Heart right ventricle (tissue), 16 donors: ENCODE measurements at regions of chr16 and their contacts with region 1.

Region 1: GRCh38 chr16:75206749-75207451 is at the start of gene CTRB2:
- DNase-seq: no peak
- ATAC-seq: peak in 2 of 8 donors; percentile 9 to 12
- H3K4me3 ChIP-seq: no peak within 1 kb of the TSS
- H3K27ac ChIP-seq: no peak within 1 kb of the TSS
- H3K4me1 ChIP-seq: no peaks in the 10 kb centered on the region
- H3K27me3 ChIP-seq: no peaks in the 10 kb centered on the region
- CTCF ChIP-seq: no peak
- total RNA-seq, gene CTRB2: 2.0 to 3.8 (median 2.8) TPM in 7 of 10 donors, not detected in the others

Region 2: GRCh38 chr16:75053791-75054555 is 152.9 kb before region 1 on chr16:
- intact Hi-C with region 1: no loop called
- DNase-seq: peak; percentile 71
- ATAC-seq: peak; percentile 29 to 85 (median 68)
- H3K4me3 ChIP-seq: no peak overlapping the region
- H3K27ac ChIP-seq: peak overlapping the region in 9 of 10 donors; percentile 10 to 78 (median 49)
- H3K4me1 ChIP-seq: peaks cover 12 to 75% (median 26%) of the 10 kb centered on the region in 9 donors
- H3K27me3 ChIP-seq: no peaks in the 10 kb centered on the region
- CTCF ChIP-seq: no peak

Region 3: DNA sequence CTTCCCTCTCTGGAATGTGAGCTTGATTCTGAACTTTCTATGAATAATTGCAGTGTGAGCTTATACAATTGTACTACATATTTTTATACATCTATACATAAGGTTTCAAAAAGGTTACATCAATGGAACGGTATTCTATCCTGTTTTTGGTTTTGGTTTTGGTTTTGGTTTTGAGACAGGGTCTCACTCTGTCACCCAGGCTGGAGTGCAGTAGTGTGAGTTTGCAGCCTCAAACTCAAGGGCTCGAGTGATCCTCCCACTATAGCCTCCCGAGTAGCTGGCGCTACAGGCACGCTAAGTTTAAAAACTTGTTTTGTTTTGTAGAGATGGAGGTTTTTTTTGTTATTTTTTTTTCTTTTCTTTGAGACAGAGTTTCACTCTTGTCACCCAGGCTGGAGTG is 12.9 kb after region 1 on chr16:
- intact Hi-C with region 1: loop called in 9 of 10 experiments (anchors 2 kb)
- DNase-seq: no peak
- ATAC-seq: no peak
- H3K4me3 ChIP-seq: peak overlapping the region in 2 of 10 donors; percentile 5 to 18
- H3K27ac ChIP-seq: no peak overlapping the region
- H3K4me1 ChIP-seq: peaks cover 0 to 10% (median 0%) of the 10 kb centered on the region in 9 donors
- H3K27me3 ChIP-seq: peaks cover 0 to 6% (median 0%) of the 10 kb centered on the region in 7 donors
- CTCF ChIP-seq: no peak

Region 4: DNA sequence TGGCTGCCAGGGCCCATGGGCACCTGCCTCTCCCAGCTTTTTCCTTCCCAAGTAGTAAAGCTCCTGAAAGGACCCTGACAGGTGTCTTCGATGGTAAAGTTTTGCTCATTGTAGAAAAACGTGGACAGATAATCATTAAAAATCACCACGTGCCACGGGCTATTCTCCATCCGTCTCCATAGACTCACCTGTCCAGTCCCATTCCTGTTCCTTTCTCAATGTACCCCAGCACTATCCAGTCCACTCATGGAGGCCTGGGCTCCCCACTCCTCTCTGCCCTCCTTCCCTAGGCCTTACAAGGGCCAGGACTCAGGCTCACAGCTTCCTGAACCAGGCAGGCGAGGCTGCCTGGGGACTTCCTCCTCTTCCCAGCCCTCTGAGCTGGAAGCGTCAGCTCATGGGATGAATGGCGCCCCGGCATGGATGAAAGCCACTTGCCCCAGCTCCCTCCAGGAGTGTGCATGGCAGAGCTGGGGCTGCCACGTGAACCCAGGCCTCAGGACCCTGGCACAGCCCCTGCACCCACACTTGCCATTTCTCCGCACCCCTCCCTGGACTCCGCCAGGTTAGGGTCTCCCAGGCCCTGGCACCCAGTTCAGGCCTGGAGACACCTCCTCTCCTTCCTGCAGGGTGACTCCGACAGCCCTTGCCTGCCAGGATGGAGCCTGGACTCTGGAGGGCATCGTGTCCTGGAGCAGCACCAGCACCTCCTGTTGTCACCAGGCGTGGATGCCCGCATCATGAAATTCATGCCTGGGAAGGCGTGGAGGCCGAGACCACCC is 20.7 kb after region 1 on chr16:
- intact Hi-C with region 1: loop called in 9 of 10 experiments (anchors 2 kb)
- DNase-seq: no peak
- ATAC-seq: peak in 2 of 8 donors; percentile 3
- H3K4me3 ChIP-seq: no peak overlapping the region
- H3K27ac ChIP-seq: no peak overlapping the region
- H3K4me1 ChIP-seq: peaks cover 0 to 45% (median 12%) of the 10 kb centered on the region in 9 donors
- H3K27me3 ChIP-seq: peaks cover 0 to 27% (median 0%) of the 10 kb centered on the region in 7 donors
- CTCF ChIP-seq: no peak

Region 5: GRCh38 chr16:75379911-75380847 is 173.3 kb after region 1 on chr16:
- intact Hi-C with region 1: loop called in 2 of 10 experiments (anchors 5 to 10 kb)
- DNase-seq: no peak
- ATAC-seq: peak in 2 of 8 donors; percentile 29 to 49
- H3K4me3 ChIP-seq: no peak overlapping the region
- H3K27ac ChIP-seq: peak overlapping the region in 3 of 10 donors; percentile 27 to 64 (median 28)
- H3K4me1 ChIP-seq: peaks cover 0 to 49% (median 14%) of the 10 kb centered on the region in 9 donors
- H3K27me3 ChIP-seq: peaks cover 0 to 69% (median 0%) of the 10 kb centered on the region in 7 donors
- CTCF ChIP-seq: no peak

Region 6: DNA sequence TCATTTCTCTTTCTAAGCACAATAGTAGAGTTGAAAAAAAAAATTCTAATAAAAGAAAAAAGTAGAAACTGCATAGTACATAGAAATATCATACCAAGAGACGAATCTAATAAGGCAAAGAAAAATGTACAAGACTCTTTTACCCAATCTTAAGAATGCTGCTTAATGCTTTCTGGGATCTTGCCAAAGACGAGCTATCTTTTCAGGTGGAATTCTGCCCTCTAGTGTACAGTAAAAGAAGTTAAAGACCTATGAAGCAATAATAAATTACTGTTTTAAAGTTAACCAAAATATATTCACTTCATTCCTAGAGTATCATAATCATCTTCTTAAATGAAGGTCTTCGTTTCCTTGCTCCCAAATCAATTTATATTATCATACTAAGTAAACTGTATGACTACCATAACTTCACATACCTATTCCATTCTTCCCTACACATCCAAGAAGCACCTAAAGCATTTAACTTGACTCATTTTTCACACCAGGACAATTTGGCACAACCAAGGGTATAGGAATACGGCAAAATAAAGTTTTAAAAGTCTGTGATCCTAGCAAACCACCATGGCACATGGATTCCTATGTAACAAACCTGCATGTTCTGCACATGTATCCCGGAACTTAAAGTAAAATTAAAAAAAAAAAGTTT is 178.7 kb after region 1 on chr16:
- intact Hi-C with region 1: loop called in 2 of 10 experiments (anchors 5 to 10 kb)
- DNase-seq: peak in 1 of 2 donors; percentile 36
- ATAC-seq: peak in 1 of 8 donors; percentile 50
- H3K4me3 ChIP-seq: no peak overlapping the region
- H3K27ac ChIP-seq: no peak overlapping the region
- H3K4me1 ChIP-seq: peaks cover 0 to 50% (median 20%) of the 10 kb centered on the region in 9 donors
- H3K27me3 ChIP-seq: peaks cover 0 to 32% (median 0%) of the 10 kb centered on the region in 7 donors
- CTCF ChIP-seq: peak; percentile 67 to 84 (median 72)

Region 7: GRCh38 chr16:75402821-75403475 is 196.0 kb after region 1 on chr16:
- intact Hi-C with region 1: loop called in 2 of 10 experiments (anchors 5 kb)
- DNase-seq: no peak
- ATAC-seq: peak in 5 of 8 donors; percentile 30 to 69 (median 56)
- H3K4me3 ChIP-seq: no peak overlapping the region
- H3K27ac ChIP-seq: peak overlapping the region in 8 of 10 donors; percentile 28 to 86 (median 74)
- H3K4me1 ChIP-seq: peaks cover 0 to 28% (median 25%) of the 10 kb centered on the region in 9 donors
- H3K27me3 ChIP-seq: no peaks in the 10 kb centered on the region
- CTCF ChIP-seq: peak; percentile 53 to 82 (median 74)

Region 8: GRCh38 chr16:75464130-75464918 is 257.4 kb after region 1 on chr16 and contains the start of gene TMEM170A:
- intact Hi-C with region 1: no loop called
- DNase-seq: peak; percentile 100
- ATAC-seq: peak; percentile 97 to 99 (median 98)
- H3K4me3 ChIP-seq: peak within 1 kb of the TSS; percentile 51 to 100 (median 99)
- H3K27ac ChIP-seq: peak within 1 kb of the TSS; percentile 94 to 99 (median 97)
- H3K4me1 ChIP-seq: peaks cover 0 to 48% (median 19%) of the 10 kb centered on the region in 9 donors
- H3K27me3 ChIP-seq: no peaks in the 10 kb centered on the region
- CTCF ChIP-seq: peak; percentile 100
- total RNA-seq, gene TMEM170A: 7.2 to 12.5 (median 9.3) TPM